ENCODE measurements at regions of chr3 and their contacts with region 1.

Region 1: GRCh38 chr3:141796081-141796888 is 33.1 kb downstream of the GRK7 start:
- DNase-seq: peak; percentile 68
- ATAC-seq: peak; percentile 88
- H3K4me3 ChIP-seq: peak overlapping the region in 3 of 5 experiments; percentile 53 to 62 (median 61)
- H3K4me3 Mint-ChIP-seq: peak overlapping the region; percentile 85
- H3K27ac ChIP-seq: peak overlapping the region; percentile 19 to 50
- H3K27ac Mint-ChIP-seq: peak overlapping the region; percentile 93
- H3K4me1 ChIP-seq: peaks cover 21 to 26% of the 10 kb centered on the region in 2 donors
- H3K4me1 Mint-ChIP-seq: peaks cover 34% of the 10 kb centered on the region
- H3K27me3 ChIP-seq: no peaks in the 10 kb centered on the region
- H3K27me3 Mint-ChIP-seq: no peaks in the 10 kb centered on the region
- CTCF ChIP-seq: no peak

Region 2: DNA sequence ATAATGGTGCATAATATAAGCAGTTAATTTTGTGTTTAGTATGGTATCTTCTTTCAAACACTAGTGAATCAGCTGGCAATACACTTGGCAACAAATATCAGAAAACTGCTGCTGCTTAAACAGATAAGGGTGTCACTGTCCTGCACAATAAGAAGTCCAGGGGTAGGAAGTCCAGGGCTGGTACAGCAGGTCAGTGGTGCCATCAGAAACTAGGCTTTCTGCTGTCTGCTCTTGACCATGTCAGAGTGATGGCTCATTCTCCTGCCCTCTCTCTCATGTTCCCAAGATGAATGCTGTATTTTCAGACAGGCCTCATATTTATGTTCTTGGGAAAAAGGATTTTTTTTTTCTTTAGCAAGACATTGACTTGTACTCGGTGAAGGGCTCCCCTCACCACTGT is 42.3 kb before region 1 on chr3:
- CTCF ChIA-PET with region 1: no interaction called
- POLR2A ChIA-PET with region 1: no interaction called
- intact Hi-C with region 1: loop called (anchors 5 kb)
- DNase-seq: no peak
- ATAC-seq: no peak
- H3K4me3 ChIP-seq: no peak overlapping the region
- H3K4me3 Mint-ChIP-seq: no peak overlapping the region
- H3K27ac ChIP-seq: no peak overlapping the region
- H3K27ac Mint-ChIP-seq: no peak overlapping the region
- H3K4me1 ChIP-seq: no peaks in the 10 kb centered on the region
- H3K4me1 Mint-ChIP-seq: no peaks in the 10 kb centered on the region
- H3K27me3 ChIP-seq: no peaks in the 10 kb centered on the region
- H3K27me3 Mint-ChIP-seq: no peaks in the 10 kb centered on the region
- CTCF ChIP-seq: no peak

Region 3: GRCh38 chr3:141782454-141782853 is 13.8 kb before region 1 on chr3:
- CTCF ChIA-PET with region 1: no interaction called
- POLR2A ChIA-PET with region 1: no interaction called
- intact Hi-C with region 1: no loop called
- DNase-seq: no peak
- ATAC-seq: no peak
- H3K4me3 ChIP-seq: no peak overlapping the region
- H3K4me3 Mint-ChIP-seq: no peak overlapping the region
- H3K27ac ChIP-seq: no peak overlapping the region
- H3K27ac Mint-ChIP-seq: no peak overlapping the region
- H3K4me1 ChIP-seq: no peaks in the 10 kb centered on the region
- H3K4me1 Mint-ChIP-seq: no peaks in the 10 kb centered on the region
- H3K27me3 ChIP-seq: no peaks in the 10 kb centered on the region
- H3K27me3 Mint-ChIP-seq: no peaks in the 10 kb centered on the region
- CTCF ChIP-seq: no peak

Measured in B cell (primary cell).